Astrocyte of the cerebellum (primary cell): ENCODE measurements at regions of chr9 and their contacts with region 1.

Region 1: GRCh38 chr9:115013998-115014397 is 83.6 kb upstream of the TNFSF8 start:
- DNase-seq: peak; percentile 76
- H3K4me3 ChIP-seq: no peak overlapping the region
- CTCF ChIP-seq: peak; percentile 77

Region 2: DNA sequence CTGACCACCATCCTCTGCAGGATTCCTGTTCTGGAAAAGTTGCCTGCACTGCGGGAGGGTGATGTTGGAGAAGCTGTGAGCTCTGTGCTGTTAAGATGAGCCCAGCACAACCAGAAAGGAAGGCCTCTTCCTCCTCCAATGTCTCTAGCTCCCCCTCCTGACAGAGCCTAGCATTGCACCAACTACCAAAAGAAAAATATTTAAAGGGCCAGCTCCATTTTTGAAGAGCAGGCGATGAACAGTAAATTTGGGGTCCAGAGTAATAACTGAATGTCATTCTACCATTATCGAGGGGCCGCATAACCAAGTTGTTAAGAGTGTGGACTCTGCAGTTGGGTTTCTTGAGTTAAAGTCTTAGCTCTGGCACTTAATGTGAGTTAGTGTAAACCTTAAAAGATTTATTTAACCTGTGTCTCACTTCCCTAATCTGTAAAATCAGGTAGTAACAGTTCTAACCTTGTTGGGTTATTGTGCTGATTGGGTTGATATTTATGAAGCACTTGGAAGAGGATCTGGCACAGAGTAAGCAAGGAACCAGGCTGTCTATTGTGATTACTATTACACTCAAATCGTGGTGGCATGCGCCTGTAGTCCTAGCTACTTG is 360.3 kb before region 1 on chr9:
- in situ Hi-C with region 1: loop called (anchors 25 kb)
- DNase-seq: peak; percentile 60
- H3K4me3 ChIP-seq: no peak overlapping the region
- CTCF ChIP-seq: peak; percentile 98

Region 3: DNA sequence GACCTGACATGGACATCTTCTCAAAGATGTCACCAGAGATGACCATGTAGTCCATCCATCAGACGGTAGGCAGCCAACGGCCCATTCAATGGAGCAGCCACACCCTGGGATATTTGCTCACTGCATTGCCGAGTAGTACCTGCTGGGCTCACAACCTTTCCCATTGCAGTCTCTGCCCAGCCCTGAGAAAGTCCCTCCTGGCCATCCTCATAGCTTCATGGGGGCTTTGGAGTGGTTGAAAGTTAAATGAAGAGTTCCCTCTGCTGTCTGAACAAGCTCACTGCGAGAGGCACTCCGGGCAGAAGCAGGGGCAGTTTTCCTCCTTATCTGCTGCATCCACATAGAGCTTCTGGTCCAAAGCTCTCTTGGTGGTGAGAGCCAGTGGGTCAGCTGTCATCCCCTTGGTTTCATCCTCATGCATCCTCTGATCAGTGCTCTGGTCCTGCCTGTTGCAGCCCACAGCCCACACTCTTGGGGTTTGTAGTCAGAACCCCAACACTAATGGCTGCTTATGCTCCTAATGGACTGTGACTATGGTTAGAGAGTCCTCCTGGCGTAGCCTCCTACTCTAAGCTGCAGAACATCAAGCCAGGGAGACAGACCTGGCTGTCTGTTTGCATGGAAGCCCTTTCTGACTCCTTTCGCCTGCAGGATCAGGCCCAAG is 107.0 kb before region 1 on chr9:
- in situ Hi-C with region 1: loop called (anchors 25 kb)
- DNase-seq: peak; percentile 37
- H3K4me3 ChIP-seq: no peak overlapping the region
- CTCF ChIP-seq: peak; percentile 85

Region 4: GRCh38 chr9:115058684-115059315 is 44.8 kb after region 1 on chr9:
- in situ Hi-C with region 1: no loop called
- DNase-seq: peak; percentile 31
- H3K4me3 ChIP-seq: no peak overlapping the region
- CTCF ChIP-seq: no peak